ENCODE measurements at regions of chr15 and their contacts with region 1.

Region 1: DNA sequence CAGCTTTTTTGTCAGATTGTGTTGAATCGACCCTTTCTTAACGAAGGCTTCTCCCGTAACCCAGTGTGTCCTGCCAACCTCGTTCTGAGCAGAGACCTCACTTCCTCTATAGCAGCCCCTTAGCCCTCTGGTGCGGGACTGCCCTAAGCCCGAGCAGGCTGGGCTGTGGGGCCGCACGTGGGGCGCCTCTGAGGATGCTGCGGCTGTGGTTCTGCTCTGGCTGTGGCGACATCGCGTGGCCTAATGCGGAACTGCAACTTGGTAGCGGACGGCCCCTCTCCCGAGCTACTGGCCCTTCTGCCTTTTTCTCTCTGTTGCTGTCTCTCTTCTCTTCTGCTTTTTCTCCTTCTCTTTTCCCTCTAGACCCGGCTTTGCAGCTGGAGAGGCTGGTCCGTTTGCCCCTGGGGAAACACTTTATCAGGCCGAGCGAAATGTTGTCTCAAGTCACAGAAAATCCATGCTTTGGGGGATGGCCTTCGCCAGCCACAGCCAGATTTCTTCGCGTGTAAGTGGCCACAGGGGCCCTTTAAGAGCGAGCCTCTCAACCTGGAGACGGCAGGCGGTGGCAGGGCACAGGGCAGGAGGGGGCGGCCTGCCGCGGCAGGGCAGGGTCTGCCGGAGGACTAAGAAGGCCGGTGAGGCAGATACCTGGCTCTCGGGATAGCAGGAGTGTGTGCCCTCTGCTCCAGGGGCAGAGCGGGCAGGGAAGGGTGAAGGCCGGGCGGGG is 19.4 kb upstream of the KIF23 start:
- DNase-seq: peak; percentile 93
- ATAC-seq: peak; percentile 87

Region 2: DNA sequence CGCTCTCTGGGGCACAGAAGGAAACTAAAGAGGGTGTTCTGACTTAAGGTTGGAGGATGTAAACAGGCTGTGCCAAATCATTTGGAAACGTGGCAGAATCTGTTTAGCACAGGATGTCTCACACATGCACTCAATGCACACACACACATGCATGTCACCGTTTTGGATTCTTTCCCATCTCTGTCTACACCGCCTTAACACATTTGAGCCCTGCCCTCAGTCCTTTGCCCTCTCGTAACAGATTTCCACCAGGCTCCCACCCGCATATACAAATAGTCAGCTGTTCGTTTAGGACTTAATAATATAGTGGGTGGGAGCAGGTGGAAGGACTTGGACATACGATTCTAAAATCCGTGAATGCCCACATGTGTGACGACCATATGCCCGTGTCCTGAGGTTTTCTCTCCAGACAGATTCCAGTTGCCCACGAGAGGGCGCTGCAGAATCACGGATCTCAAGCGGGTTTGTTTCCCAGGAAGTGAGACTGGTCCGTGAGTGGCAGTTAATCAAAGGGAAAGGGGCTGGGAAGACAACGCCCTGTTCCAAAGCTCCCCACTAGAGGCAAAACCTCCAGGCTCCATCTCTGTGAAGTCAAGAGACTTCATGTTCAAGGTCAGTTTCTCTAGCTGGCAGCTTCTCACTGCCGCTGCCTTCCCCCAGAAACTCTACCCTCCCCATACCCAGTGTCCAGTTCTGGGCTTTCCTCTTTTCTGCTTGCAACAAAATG is 335.7 kb before region 1 on chr15:
- intact Hi-C with region 1: loop called (anchors 1 kb)
- DNase-seq: peak; percentile 89
- ATAC-seq: peak; percentile 78

Region 3: DNA sequence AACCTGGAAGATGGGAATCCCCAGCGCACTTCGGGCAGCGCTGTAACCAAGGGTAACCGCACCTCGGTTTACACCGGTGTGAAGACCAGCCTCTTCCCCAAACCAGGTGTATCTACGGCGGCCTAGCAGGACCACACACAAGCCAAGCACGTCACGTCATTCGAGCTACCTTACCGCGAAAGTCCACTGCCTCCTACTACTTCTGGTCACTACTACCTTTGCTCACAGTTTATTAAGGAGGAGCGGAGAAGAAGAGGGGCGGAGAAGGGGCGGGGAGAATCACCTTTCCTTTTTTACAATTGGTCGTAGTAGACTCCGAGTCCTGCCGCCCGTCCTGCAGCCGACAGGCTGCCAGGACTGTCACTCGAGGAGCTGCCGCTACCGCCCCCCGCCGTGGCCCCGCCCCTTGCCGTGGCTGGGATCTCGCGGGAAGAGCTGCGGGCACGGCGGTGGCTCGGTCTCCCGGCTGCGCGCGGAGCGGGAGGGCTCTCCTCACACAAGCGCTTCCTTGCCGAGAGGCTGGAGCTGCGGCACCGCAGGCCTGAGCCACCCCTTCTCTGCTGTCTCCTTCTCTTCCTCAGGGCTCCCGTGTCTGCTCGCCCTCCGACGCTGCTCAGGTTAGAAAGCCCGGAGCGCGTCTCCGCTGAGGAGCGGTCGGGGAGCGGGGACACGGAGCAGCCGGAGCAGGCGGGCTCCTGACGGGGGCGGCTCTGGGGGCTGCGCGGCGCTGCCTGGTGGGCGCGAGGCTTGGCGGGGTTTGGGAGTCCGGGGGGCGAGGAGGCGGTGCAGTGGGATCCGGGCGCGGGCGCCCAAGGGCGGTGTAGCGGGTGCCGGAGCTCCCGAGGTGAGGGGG is 234.4 kb before region 1 on chr15 and contains the start of gene GLCE:
- intact Hi-C with region 1: loop called (anchors 10 kb)
- DNase-seq: peak; percentile 98
- ATAC-seq: peak; percentile 99
- total RNA-seq, gene GLCE: 8.9 TPM

Region 4: GRCh38 chr15:69225355-69226025 is 169.2 kb before region 1 on chr15:
- intact Hi-C with region 1: loop called (anchors 5 kb)
- DNase-seq: no peak
- ATAC-seq: no peak

Region 5: GRCh38 chr15:69265347-69265955 is 129.3 kb before region 1 on chr15:
- intact Hi-C with region 1: loop called (anchors 5 kb)
- DNase-seq: no peak
- ATAC-seq: no peak